PC-9 (cell line): ENCODE measurements at regions of chr17 and their contacts with region 1.

Region 1: GRCh38 chr17:35030780-35031179 is 32.7 kb downstream of the RFFL start:
- DNase-seq: no peak
- H3K4me3 ChIP-seq: no peak overlapping the region
- H3K27ac ChIP-seq: no peak overlapping the region
- H3K4me1 ChIP-seq: peaks cover 18% of the 10 kb centered on the region
- H3K27me3 ChIP-seq: no peaks in the 10 kb centered on the region
- CTCF ChIP-seq: no peak

Region 2: GRCh38 chr17:33653399-33653788 is 1377.4 kb before region 1 on chr17:
- CTCF ChIA-PET with region 1: no interaction called
- POLR2A ChIA-PET with region 1: interaction called, 10 read pairs
- intact Hi-C with region 1: no loop called
- DNase-seq: no peak
- H3K4me3 ChIP-seq: no peak overlapping the region
- H3K27ac ChIP-seq: no peak overlapping the region
- H3K4me1 ChIP-seq: no peaks in the 10 kb centered on the region
- H3K27me3 ChIP-seq: no peaks in the 10 kb centered on the region
- CTCF ChIP-seq: no peak